ENCODE measurements at regions of chr16 and their contacts with region 1.

Region 1: DNA sequence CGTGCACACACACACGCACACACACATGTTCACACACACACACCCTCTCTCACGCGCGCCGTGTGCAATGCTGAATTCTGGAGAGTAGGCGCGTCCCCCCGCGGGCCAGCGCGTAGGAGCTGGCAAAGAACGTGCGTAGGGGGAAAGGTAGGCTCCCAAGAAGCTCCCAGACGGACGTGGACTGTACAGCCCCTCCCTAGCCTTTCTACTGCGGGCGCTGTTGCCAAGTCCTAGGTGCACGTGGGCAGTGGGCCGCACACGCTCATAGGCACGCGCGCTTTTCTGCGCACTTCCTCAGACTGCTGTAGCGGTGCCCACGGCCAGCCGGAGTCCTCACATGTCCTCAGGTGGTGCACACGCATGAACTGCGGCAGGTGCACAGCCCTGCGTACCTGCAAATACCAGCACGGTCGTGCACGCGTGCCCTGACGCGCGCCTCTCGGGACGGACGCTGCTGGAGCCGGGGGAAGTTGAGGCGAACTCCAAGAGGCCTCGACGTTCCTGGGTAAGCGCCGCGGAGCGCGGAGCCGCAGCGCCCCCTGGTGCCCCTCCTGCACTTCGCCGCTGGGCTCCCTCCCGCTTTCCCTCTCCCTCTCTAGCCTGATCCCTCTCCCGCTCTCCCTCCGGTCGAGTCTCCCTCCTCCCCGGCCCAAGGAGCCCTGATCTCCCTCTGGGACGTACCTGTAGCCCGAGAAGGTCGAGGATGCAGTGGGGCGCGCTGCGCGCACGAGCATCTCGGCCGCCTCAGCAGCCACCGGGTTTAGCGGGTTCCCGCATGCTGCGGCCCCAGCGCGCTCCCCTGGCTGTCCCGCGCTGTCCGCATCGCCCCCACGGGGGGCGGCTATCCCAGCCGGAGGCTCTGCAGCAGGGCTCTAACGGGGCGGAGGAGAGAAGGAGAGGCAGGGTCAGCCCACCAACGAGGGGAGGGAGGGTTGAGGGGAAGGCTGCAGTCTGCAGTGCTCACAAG is 749 bp downstream of the GRIN2A start:
- DNase-seq: peak; percentile 27 to 54
- ATAC-seq: peak; percentile 95

Region 2: GRCh38 chr16:9297437-9298113 is 883.9 kb before region 1 on chr16:
- intact Hi-C with region 1: loop called in 1 of 2 experiments (anchors 5 kb)
- DNase-seq: no peak
- ATAC-seq: no peak